ENCODE measurements at regions of chr5 and their contacts with region 1.

Region 1: GRCh38 chr5:125835293-125836172 is 587.7 kb upstream of the GRAMD2B start:
- DNase-seq: peak; percentile 68
- H3K4me3 ChIP-seq: no peak overlapping the region
- H3K27ac ChIP-seq: no peak overlapping the region
- H3K4me1 ChIP-seq: no peaks in the 10 kb centered on the region
- H3K27me3 ChIP-seq: no peaks in the 10 kb centered on the region
- CTCF ChIP-seq: peak; percentile 60 to 73
- POLR2A ChIP-seq: no peak

Region 2: DNA sequence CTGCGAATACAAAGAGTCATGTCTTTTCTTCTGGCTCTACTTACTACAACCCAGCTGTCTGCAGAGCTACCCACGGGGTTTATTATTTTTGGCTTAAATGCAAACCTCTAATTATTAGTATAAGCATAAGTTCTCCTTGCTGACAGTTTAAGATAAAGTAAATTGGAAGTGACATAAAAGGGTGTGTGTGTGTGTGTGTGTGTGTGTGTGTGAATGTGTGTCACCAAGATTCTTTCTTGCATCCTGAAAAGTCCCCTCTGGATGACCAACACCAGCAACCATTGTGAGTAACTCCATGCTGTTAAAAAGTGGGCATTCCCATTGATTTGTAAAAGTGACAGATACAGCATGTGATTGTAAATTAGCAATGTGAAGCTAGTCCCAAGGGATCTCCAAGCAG is 285.3 kb before region 1 on chr5:
- CTCF ChIA-PET with region 1: no interaction called
- POLR2A ChIA-PET with region 1: no interaction called
- dilution Hi-C with region 1: no loop called
- intact Hi-C with region 1: loop called (anchors 5 kb)
- DNase-seq: peak; percentile 97
- H3K4me3 ChIP-seq: no peak overlapping the region
- H3K27ac ChIP-seq: peak overlapping the region; percentile 69
- H3K4me1 ChIP-seq: peaks cover 30% of the 10 kb centered on the region
- H3K27me3 ChIP-seq: no peaks in the 10 kb centered on the region
- CTCF ChIP-seq: no peak
- POLR2A ChIP-seq: peak; percentile 66